GM10248 (cell line): ENCODE measurements at regions of chr2 and their contacts with region 1.

Region 1: DNA sequence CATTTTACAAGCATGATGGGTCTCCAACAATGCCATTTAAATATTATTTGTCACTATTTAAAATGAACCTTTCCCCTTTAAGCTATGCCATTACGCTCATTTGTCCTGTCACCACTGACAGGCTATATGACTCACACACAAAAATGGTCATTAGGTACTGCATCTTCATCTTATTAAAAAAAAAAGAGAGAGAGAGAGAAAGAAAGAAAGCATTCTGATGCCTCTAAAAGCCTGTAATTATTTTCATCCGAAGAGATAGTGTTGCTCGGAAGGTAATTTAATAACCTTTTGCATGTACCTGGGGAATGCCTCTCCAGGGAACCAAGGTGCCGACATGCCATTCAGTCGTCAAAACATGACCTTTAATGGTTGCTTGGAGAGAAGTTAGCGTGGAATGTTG is 226.7 kb downstream of the ARHGAP15 start:
- DNase-seq: no peak
- CTCF ChIP-seq: no peak

Region 2: GRCh38 chr2:143230506-143231253 is 125.2 kb before region 1 on chr2:
- CTCF ChIA-PET with region 1: no interaction called
- POLR2A ChIA-PET with region 1: no interaction called
- DNase-seq: no peak
- CTCF ChIP-seq: no peak

Region 3: GRCh38 chr2:143341478-143341877 is 14.4 kb before region 1 on chr2:
- CTCF ChIA-PET with region 1: interaction called, 10 read pairs
- POLR2A ChIA-PET with region 1: no interaction called
- DNase-seq: no peak
- CTCF ChIP-seq: no peak

Region 4: GRCh38 chr2:143615562-143615961 is 259.7 kb after region 1 on chr2:
- CTCF ChIA-PET with region 1: no interaction called
- POLR2A ChIA-PET with region 1: no interaction called
- DNase-seq: no peak
- CTCF ChIP-seq: no peak